ENCODE measurements at regions of chr17 and their contacts with region 1.

Region 1: GRCh38 chr17:73956669-73957465 is 246.6 kb upstream of the RPL38 start:
- DNase-seq: peak in 2 of 5 donors; percentile 20 to 37
- ATAC-seq: peak in 3 of 4 donors; percentile 37 to 57 (median 42)
- H3K4me3 ChIP-seq: no peak overlapping the region
- H3K27ac ChIP-seq: no peak overlapping the region
- H3K4me1 ChIP-seq: peaks cover 0 to 12% (median 9%) of the 10 kb centered on the region in 12 donors
- H3K27me3 ChIP-seq: peaks cover 0 to 21% (median 12%) of the 10 kb centered on the region in 9 donors
- CTCF ChIP-seq: peak; percentile 13 to 54 (median 44)
- POLR2A ChIP-seq: no peak

Region 2: DNA sequence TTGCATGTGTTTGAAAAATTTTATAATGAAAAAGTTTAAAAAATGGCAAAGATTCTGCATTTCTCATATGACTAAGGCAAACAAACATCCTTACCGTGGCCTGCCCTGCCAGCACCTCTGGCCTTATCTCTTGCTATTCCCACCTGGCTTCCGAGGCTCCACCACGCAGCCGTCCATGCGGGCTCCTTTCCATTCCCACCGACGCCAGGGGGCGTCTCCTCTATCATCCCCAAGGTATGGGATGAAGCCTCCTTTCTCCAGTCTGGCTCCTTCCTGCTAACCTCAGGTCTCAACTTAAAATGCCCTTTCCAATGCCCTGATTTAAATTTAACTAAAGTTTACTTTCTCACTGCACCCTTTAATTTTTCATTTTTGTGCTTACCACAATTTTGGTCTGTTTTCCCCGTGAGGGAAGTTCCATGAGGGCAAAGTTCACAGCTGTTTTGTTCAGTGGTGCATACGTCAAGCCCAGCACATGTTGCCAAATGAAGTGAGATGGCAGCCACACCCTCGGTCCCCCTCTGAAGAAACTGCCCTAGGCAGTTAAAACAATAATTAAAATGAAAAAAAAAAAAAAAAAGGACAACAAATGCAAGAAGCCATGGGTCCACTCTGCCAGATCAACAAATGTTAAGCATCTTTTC is 299.3 kb before region 1 on chr17:
- intact Hi-C with region 1: loop called in 5 of 10 experiments (anchors 5 to 10 kb)
- DNase-seq: peak in 4 of 5 donors; percentile 39 to 77 (median 60)
- ATAC-seq: peak; percentile 55 to 76 (median 68)
- H3K4me3 ChIP-seq: no peak overlapping the region
- H3K27ac ChIP-seq: no peak overlapping the region
- H3K4me1 ChIP-seq: peaks cover 0 to 7% (median 0%) of the 10 kb centered on the region in 12 donors
- H3K27me3 ChIP-seq: peaks cover 0 to 18% (median 0%) of the 10 kb centered on the region in 9 donors
- CTCF ChIP-seq: peak; percentile 43 to 72 (median 54)
- POLR2A ChIP-seq: no peak

Region 3: GRCh38 chr17:73697872-73698271 is 259.0 kb before region 1 on chr17:
- intact Hi-C with region 1: no loop called
- DNase-seq: no peak
- ATAC-seq: no peak
- H3K4me3 ChIP-seq: no peak overlapping the region
- H3K27ac ChIP-seq: no peak overlapping the region
- H3K4me1 ChIP-seq: no peaks in the 10 kb centered on the region
- H3K27me3 ChIP-seq: peaks cover 0 to 5% (median 0%) of the 10 kb centered on the region in 9 donors
- CTCF ChIP-seq: peak in 1 of 12 donors; percentile 6
- POLR2A ChIP-seq: no peak

Region 4: GRCh38 chr17:73820686-73821448 is 136.0 kb before region 1 on chr17:
- intact Hi-C with region 1: loop called in 1 of 10 experiments (anchors 10 kb)
- DNase-seq: no peak
- ATAC-seq: peak in 2 of 4 donors; percentile 45 to 64
- H3K4me3 ChIP-seq: no peak overlapping the region
- H3K27ac ChIP-seq: no peak overlapping the region
- H3K4me1 ChIP-seq: peaks cover 0 to 8% (median 0%) of the 10 kb centered on the region in 12 donors
- H3K27me3 ChIP-seq: peaks cover 0 to 11% (median 0%) of the 10 kb centered on the region in 9 donors
- CTCF ChIP-seq: peak in 7 of 12 donors; percentile 10 to 35 (median 17)
- POLR2A ChIP-seq: no peak

Region 5: GRCh38 chr17:73833775-73834488 is 122.9 kb before region 1 on chr17:
- intact Hi-C with region 1: loop called in 2 of 10 experiments (anchors 10 kb)
- DNase-seq: no peak
- ATAC-seq: no peak
- H3K4me3 ChIP-seq: no peak overlapping the region
- H3K27ac ChIP-seq: no peak overlapping the region
- H3K4me1 ChIP-seq: no peaks in the 10 kb centered on the region
- H3K27me3 ChIP-seq: peaks cover 0 to 46% (median 10%) of the 10 kb centered on the region in 9 donors
- CTCF ChIP-seq: no peak
- POLR2A ChIP-seq: no peak